Naive thymus-derived CD4-positive, alpha-beta T cell (primary cell): ENCODE measurements at regions of chr1 and their contacts with region 1.

Region 1: GRCh38 chr1:116806245-116806644 is 52.0 kb downstream of the CD2 start:
- DNase-seq: peak in 2 of 9 donors; percentile 6 to 44
- ATAC-seq: peak; percentile 50
- H3K4me3 ChIP-seq: peak overlapping the region; percentile 43
- H3K4me3 Mint-ChIP-seq: peak overlapping the region in 4 of 10 donors; percentile 16 to 85 (median 44)
- H3K27ac ChIP-seq: no peak overlapping the region
- H3K27ac Mint-ChIP-seq: peak overlapping the region; percentile 12 to 92 (median 67)
- H3K4me1 ChIP-seq: peaks cover 19 to 68% of the 10 kb centered on the region in 2 donors
- H3K4me1 Mint-ChIP-seq: peaks cover 53 to 87% (median 67%) of the 10 kb centered on the region in 7 donors
- H3K27me3 ChIP-seq: no peaks in the 10 kb centered on the region
- H3K27me3 Mint-ChIP-seq: no peaks in the 10 kb centered on the region

Region 2: DNA sequence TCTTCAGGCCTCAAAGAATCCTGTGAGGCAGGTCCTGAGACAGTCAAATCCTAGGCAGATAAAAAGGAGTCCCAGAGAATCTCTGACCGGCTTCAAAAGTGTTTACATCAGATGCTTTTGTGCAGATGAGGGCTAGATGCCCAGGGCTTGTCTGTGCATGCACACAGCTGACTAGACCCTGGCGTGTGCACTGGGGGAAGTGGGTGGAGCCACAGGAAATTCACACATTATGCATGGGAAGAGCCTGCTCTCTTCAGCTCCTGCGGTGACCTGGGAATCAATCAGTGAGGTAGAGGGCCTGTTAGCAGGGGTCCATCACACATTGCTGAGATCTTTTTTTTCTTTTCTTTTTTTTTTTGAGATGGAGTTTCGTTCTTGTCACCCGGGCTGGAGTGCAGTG is 928.7 kb before region 1 on chr1:
- CTCF ChIA-PET with region 1: no interaction called
- POLR2A ChIA-PET with region 1: no interaction called
- intact Hi-C with region 1: no loop called
- DNase-seq: no peak
- ATAC-seq: no peak
- H3K4me3 ChIP-seq: no peak overlapping the region
- H3K4me3 Mint-ChIP-seq: no peak overlapping the region
- H3K27ac ChIP-seq: no peak overlapping the region
- H3K27ac Mint-ChIP-seq: no peak overlapping the region
- H3K4me1 ChIP-seq: no peaks in the 10 kb centered on the region
- H3K4me1 Mint-ChIP-seq: no peaks in the 10 kb centered on the region
- H3K27me3 ChIP-seq: no peaks in the 10 kb centered on the region
- H3K27me3 Mint-ChIP-seq: peaks cover 5 to 45% (median 31%) of the 10 kb centered on the region in 5 donors

Region 3: DNA sequence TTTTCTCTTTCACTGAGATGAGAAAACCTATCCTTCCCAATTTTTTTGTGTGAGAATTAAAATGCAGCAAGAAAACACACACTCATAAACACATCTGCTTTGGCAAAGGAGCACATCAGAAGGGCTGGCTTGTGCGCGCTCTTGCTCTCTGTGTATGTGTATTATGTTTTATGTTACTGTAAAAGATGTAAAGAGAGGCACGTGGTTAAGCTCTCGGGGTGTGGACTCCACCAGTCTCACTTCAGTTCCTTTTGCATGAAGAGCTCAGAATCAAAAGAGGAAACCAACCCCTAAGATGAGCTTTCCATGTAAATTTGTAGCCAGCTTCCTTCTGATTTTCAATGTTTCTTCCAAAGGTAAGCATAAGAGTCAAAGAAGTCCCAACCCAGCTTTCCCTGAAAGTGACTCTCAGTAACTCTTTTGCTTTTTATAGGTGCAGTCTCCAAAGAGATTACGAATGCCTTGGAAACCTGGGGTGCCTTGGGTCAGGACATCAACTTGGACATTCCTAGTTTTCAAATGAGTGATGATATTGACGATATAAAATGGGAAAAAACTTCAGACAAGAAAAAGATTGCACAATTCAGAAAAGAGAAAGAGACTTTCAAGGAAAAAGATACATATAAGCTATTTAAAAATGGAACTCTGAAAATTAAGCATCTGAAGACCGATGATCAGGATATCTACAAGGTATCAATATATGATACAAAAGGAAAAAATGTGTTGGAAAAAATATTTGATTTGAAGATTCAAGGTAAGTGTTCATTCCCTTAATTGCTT is 51.9 kb before region 1 on chr1 and contains the start of gene CD2:
- CTCF ChIA-PET with region 1: no interaction called
- POLR2A ChIA-PET with region 1: interaction called, 10 read pairs
- intact Hi-C with region 1: no loop called
- DNase-seq: peak in 7 of 9 donors; percentile 58 to 79 (median 71)
- ATAC-seq: peak; percentile 91
- H3K4me3 ChIP-seq: peak within 1 kb of the TSS; percentile 90
- H3K4me3 Mint-ChIP-seq: peak within 1 kb of the TSS; percentile 91 to 100 (median 98)
- H3K27ac ChIP-seq: peak within 1 kb of the TSS; percentile 89
- H3K27ac Mint-ChIP-seq: peak within 1 kb of the TSS; percentile 93 to 99 (median 97)
- H3K4me1 ChIP-seq: peaks cover 27 to 31% of the 10 kb centered on the region in 2 donors
- H3K4me1 Mint-ChIP-seq: peaks cover 25 to 47% (median 43%) of the 10 kb centered on the region in 7 donors
- H3K27me3 ChIP-seq: no peaks in the 10 kb centered on the region
- H3K27me3 Mint-ChIP-seq: no peaks in the 10 kb centered on the region
- total RNA-seq, gene CD2: 105 to 307 (median 174) TPM

Region 4: GRCh38 chr1:116769561-116769977 is 36.7 kb before region 1 on chr1:
- CTCF ChIA-PET with region 1: interaction called, 3 read pairs
- POLR2A ChIA-PET with region 1: interaction called, 8 read pairs
- intact Hi-C with region 1: loop called in 1 of 2 experiments (anchors 2 kb)
- DNase-seq: peak in 8 of 9 donors; percentile 60 to 92 (median 86)
- ATAC-seq: peak; percentile 91
- H3K4me3 ChIP-seq: peak overlapping the region; percentile 24
- H3K4me3 Mint-ChIP-seq: peak overlapping the region; percentile 51 to 99 (median 78)
- H3K27ac ChIP-seq: peak overlapping the region; percentile 89
- H3K27ac Mint-ChIP-seq: peak overlapping the region; percentile 84 to 100 (median 97)
- H3K4me1 ChIP-seq: peaks cover 80 to 81% of the 10 kb centered on the region in 2 donors
- H3K4me1 Mint-ChIP-seq: peaks cover 64 to 97% (median 91%) of the 10 kb centered on the region in 7 donors
- H3K27me3 ChIP-seq: no peaks in the 10 kb centered on the region
- H3K27me3 Mint-ChIP-seq: no peaks in the 10 kb centered on the region

Region 5: DNA sequence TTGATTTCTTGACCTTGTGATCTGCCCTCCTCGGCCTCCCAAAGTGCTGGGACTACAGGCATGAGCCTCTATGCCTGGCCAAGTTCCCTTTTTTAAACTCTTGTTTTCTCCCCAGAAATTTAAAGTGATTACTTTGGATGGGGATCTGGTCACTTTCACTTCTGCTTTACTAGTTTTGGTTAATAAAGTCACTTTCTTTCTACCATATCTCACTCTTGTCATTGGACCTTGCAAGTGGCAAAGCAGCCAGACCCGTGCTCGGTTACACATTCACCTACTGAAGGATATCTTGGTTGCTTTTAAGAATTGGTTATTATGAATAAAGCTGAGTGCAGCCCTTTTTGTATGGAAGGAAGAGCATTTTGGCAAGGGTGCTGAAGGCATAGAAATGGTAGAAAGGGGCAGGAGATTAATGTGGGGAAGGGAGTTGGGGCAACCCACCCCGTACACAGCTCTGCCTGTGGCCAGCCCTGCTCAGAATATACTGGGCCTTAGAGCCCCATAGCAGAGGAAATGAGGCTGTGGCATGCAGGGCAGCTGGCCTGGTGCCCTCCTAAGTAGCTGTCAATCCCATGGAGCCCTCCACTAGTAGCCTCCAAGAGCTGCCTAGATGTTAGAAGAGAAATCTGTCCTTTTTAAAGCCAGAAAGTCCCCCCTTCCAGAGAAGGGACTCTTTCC is 11.3 kb before region 1 on chr1:
- CTCF ChIA-PET with region 1: interaction called, 3 read pairs
- POLR2A ChIA-PET with region 1: interaction called, 3 read pairs
- intact Hi-C with region 1: loop called (anchors 1 to 2 kb)
- DNase-seq: no peak
- ATAC-seq: peak; percentile 62
- H3K4me3 ChIP-seq: no peak overlapping the region
- H3K4me3 Mint-ChIP-seq: no peak overlapping the region
- H3K27ac ChIP-seq: no peak overlapping the region
- H3K27ac Mint-ChIP-seq: peak overlapping the region in 5 of 9 donors; percentile 26 to 61 (median 45)
- H3K4me1 ChIP-seq: peaks cover 24 to 29% of the 10 kb centered on the region in 2 donors
- H3K4me1 Mint-ChIP-seq: peaks cover 43 to 68% (median 60%) of the 10 kb centered on the region in 7 donors
- H3K27me3 ChIP-seq: no peaks in the 10 kb centered on the region
- H3K27me3 Mint-ChIP-seq: no peaks in the 10 kb centered on the region

Region 6: GRCh38 chr1:116826818-116827606 is 20.8 kb after region 1 on chr1:
- CTCF ChIA-PET with region 1: interaction called, 3 read pairs
- POLR2A ChIA-PET with region 1: no interaction called
- intact Hi-C with region 1: loop called in 1 of 2 experiments (anchors 1 kb)
- DNase-seq: peak in 3 of 9 donors; percentile 11 to 64 (median 46)
- ATAC-seq: peak; percentile 59
- H3K4me3 ChIP-seq: no peak overlapping the region
- H3K4me3 Mint-ChIP-seq: peak overlapping the region in 6 of 10 donors; percentile 1 to 76 (median 22)
- H3K27ac ChIP-seq: no peak overlapping the region
- H3K27ac Mint-ChIP-seq: peak overlapping the region; percentile 10 to 94 (median 77)
- H3K4me1 ChIP-seq: peaks cover 10 to 12% of the 10 kb centered on the region in 2 donors
- H3K4me1 Mint-ChIP-seq: peaks cover 11 to 60% (median 25%) of the 10 kb centered on the region in 7 donors
- H3K27me3 ChIP-seq: no peaks in the 10 kb centered on the region
- H3K27me3 Mint-ChIP-seq: peaks cover 0 to 3% (median 0%) of the 10 kb centered on the region in 5 donors